ENCODE measurements at regions of chr6 and their contacts with region 1.

Region 1: GRCh38 chr6:5143634-5144311 is 58.6 kb downstream of the PPP1R3G start:
- DNase-seq: peak; percentile 89

Region 2: GRCh38 chr6:5302995-5303622 is 159.3 kb after region 1 on chr6:
- intact Hi-C with region 1: loop called (anchors 2 kb)
- DNase-seq: no peak

Region 3: GRCh38 chr6:5401845-5402738 is 258.3 kb after region 1 on chr6:
- intact Hi-C with region 1: loop called (anchors 2 kb)
- DNase-seq: no peak

Region 4: DNA sequence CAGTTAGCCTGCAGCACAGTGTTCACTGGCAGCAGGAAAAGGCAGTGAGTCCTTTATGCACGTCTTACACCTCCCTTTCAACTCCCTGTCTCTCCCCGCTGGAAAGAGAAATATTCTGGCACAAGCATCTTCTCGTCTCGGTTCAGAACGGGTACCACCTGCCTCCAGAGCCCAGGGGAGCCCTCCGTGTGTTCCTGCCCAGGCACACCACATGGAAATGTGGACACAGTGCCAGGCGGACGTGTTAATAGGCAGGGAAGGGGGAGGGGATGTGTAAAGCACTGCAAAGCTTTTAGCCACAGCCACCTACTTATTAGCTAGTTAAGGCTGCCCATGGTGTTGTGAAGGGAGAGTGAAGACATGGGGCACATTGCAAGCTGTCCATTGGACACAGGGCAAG is 337.3 kb after region 1 on chr6:
- intact Hi-C with region 1: no loop called
- DNase-seq: no peak

Measured in cardiac septum (tissue), 1 donor.